Common myeloid progenitor, CD34-positive (primary cell): ENCODE measurements at regions of chr17 and their contacts with region 1.

Region 1: GRCh38 chr17:48024937-48025906 is 12.4 kb downstream of the COPZ2 start:
- DNase-seq: peak; percentile 94 to 96 (median 96)
- H3K4me3 ChIP-seq: peak overlapping the region; percentile 41 to 89 (median 72)
- H3K27ac ChIP-seq: no peak overlapping the region
- H3K4me1 ChIP-seq: peaks cover 4 to 38% (median 35%) of the 10 kb centered on the region in 4 experiments
- H3K27me3 ChIP-seq: peaks cover 0 to 2% (median 0%) of the 10 kb centered on the region in 5 experiments

Region 2: GRCh38 chr17:48003417-48004191 is 21.6 kb before region 1 on chr17:
- CTCF ChIA-PET with region 1: no interaction called
- POLR2A ChIA-PET with region 1: no interaction called
- DNase-seq: no peak
- H3K4me3 ChIP-seq: no peak overlapping the region
- H3K27ac ChIP-seq: no peak overlapping the region
- H3K4me1 ChIP-seq: peaks cover 0 to 50% (median 22%) of the 10 kb centered on the region in 4 experiments
- H3K27me3 ChIP-seq: no peaks in the 10 kb centered on the region

Region 3: GRCh38 chr17:48037036-48037837 is 12.0 kb after region 1 on chr17 and contains the start of gene COPZ2:
- CTCF ChIA-PET with region 1: interaction called, 40 read pairs
- POLR2A ChIA-PET with region 1: no interaction called
- DNase-seq: peak; percentile 51 to 75 (median 74)
- H3K4me3 ChIP-seq: peak within 1 kb of the TSS; percentile 29 to 84 (median 60)
- H3K27ac ChIP-seq: no peak within 1 kb of the TSS
- H3K4me1 ChIP-seq: peaks cover 0 to 13% (median 11%) of the 10 kb centered on the region in 4 experiments
- H3K27me3 ChIP-seq: peaks cover 4 to 41% (median 12%) of the 10 kb centered on the region in 5 experiments

Region 4: DNA sequence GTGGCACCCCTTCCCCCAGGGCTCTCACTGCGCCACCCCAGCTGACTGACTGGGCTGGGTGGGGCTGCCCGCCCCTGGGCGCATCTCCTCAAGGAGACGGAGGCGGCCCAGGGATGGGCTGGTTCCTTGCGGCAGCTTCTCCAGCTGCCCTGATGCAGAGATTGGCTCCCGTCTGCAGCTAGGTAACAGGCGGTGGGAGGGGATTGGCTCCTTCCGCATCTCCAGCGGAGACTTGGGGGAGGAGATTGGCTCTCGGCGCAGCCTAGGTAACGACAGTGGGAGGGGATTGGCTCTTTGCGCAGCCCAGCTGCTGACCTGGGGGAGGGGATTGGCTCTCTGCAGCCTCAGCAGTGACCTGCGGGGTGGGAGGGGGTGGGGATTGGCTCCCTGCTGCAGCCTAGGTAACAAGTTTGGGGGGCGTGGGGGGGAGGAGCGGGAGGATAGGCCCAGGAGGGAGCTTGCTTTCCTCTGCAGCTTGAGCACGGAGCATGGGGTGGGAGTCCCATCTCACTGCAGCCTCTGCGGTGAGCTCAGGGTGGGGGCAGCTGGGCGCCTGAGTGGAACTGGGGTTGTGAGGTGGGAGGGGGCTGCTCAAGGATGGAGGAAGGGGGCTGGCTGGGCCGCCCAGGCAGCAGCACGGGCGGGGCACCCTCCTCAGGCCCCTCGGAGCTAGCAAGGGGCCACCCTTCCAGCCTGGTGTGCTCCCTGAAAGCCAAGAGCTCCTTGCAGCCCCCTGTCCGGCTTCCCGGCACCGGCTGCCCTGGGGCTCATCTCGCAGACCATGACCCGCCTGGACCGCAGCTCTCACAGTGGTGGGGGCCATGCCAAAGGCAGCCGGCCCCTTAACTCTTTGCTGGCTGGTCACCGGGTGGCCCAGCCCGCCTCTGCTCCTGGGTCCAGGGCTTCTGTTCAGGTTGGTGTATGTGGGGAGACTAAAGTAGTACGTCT is 29.3 kb after region 1 on chr17:
- CTCF ChIA-PET with region 1: interaction called, 36 read pairs
- POLR2A ChIA-PET with region 1: no interaction called
- DNase-seq: no peak
- H3K4me3 ChIP-seq: no peak overlapping the region
- H3K27ac ChIP-seq: no peak overlapping the region
- H3K4me1 ChIP-seq: peaks cover 0 to 39% (median 32%) of the 10 kb centered on the region in 4 experiments
- H3K27me3 ChIP-seq: no peaks in the 10 kb centered on the region

Region 5: DNA sequence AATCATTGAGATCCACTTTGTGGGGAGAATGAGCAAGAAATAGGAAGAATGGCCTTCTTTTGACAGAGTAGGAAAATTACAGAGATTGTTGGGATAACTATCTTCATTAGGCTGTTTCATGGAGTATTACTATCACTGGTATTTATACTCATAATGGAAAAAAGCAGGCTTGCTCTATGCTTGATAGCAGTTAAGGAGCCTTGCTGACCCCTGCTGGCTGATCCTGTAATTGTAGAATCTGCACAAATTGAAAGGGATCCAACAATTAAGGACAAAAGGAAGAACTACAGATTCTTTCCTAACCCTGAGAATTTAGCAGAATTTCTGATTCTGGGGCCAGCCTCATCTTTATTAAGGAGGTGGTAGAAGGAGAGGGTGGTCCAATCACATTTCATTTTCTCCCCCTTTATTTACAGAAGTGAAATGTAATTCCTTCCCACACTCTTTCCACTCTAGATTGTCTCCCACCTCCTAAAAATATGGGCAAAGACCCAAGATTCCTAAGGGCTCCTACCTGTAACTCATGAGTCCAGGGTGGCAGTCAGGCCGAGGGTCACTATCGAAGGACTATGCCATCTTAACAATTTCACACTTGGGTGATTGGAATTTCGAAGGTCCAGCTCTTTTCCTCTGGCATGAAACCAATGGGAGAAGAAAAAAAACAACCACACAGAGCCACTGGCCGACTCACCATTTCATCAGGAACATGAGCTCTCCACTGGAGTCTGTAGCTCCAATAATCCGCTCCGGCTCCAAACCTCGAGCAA is 49.3 kb after region 1 on chr17:
- CTCF ChIA-PET with region 1: interaction called, 188 read pairs
- POLR2A ChIA-PET with region 1: interaction called, 9 read pairs
- DNase-seq: peak; percentile 72 to 84 (median 75)
- H3K4me3 ChIP-seq: no peak overlapping the region
- H3K27ac ChIP-seq: no peak overlapping the region
- H3K4me1 ChIP-seq: no peaks in the 10 kb centered on the region
- H3K27me3 ChIP-seq: no peaks in the 10 kb centered on the region

Region 6: DNA sequence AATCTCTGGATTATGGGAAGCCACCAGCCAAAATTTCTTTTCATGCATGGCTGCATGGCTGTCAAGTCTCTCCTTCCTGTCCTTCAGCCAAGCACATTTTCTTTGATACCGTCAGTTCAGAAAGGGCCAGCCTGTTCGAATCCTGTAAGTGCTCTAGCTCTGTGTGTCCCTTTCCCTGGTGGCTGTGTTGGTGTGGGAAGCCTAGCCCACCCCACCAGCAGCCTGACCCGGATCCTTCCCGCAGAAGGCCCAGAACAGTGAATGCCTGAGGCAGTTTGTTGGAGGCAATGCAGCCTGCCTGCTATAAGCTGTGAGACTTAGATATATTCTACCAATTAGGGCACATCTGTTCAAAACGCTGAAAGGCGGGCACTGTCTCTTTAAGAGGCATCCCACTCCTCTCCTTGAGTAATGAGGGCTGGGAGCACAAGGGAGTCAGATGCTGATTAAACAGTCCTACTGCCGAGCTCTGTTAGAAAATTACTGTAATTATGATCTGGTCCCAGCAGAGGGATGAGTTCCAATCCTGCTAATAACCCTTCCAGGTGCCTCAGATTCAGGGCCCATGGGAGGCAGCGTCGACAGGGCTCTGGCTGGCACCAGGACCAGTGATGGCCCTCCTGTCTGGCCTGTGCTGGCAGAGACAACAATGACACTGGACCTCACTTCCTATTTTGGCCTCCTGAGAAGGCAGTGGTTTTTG is 100.8 kb after region 1 on chr17:
- CTCF ChIA-PET with region 1: interaction called, 14 read pairs
- POLR2A ChIA-PET with region 1: no interaction called
- DNase-seq: no peak
- H3K4me3 ChIP-seq: no peak overlapping the region
- H3K27ac ChIP-seq: no peak overlapping the region
- H3K4me1 ChIP-seq: no peaks in the 10 kb centered on the region
- H3K27me3 ChIP-seq: no peaks in the 10 kb centered on the region